Dorsolateral prefrontal cortex (tissue), 120 donors: ENCODE measurements at regions of chr14 and their contacts with region 1.

Region 1: DNA sequence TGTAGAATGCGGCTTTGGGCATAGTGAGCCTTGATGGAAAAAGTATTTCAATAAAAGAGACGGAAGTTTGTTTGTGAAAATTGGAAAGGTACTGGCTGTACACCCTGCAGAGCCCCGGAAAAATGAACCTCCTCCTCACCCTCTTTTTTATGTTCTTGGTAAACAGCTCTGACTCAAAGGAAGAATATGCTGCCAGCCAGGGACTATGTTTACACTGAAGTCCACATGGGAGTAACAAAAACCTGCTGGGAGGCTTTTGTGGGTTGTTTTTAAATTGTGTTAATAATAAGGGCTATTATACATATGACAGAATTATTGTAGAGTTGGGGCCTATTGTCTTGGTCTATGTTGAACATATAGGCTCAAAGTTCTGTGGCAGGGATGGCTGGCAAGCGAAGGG is 70.7 kb downstream of the TTC8 start:
- DNase-seq: no peak
- H3K4me3 ChIP-seq: no peak overlapping the region
- H3K27ac ChIP-seq: peak overlapping the region in 1 of 59 donors; percentile 3
- H3K27me3 ChIP-seq: no peaks in the 10 kb centered on the region
- CTCF ChIP-seq: no peak

Region 2: GRCh38 chr14:88630565-88630964 is 264.6 kb before region 1 on chr14:
- intact Hi-C with region 1: no loop called
- DNase-seq: no peak
- H3K4me3 ChIP-seq: no peak overlapping the region
- H3K27ac ChIP-seq: no peak overlapping the region
- H3K27me3 ChIP-seq: no peaks in the 10 kb centered on the region
- CTCF ChIP-seq: no peak

Region 3: DNA sequence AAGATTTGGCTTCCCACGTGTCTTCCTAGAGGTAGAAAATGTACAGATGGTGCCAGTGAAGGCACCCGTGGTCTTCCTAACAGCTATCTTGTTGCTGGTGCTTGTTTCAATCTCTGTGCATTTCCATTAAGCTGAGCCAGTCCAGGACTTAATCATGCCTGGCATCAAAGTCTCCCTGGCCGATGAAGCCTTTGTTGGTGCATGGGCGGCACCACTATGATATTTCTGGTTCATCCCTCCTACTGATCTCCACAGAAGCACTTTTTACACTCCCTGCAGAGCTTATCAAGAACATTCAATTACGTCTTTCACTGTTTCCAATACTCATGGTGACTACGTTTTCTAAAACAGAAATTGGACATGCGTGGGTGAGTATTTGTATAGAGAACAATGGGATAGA is 57.8 kb after region 1 on chr14:
- intact Hi-C with region 1: loop called in 1 of 2 experiments (anchors 2 kb)
- DNase-seq: peak in 5 of 10 donors; percentile 30 to 64 (median 53)
- H3K4me3 ChIP-seq: no peak overlapping the region
- H3K27ac ChIP-seq: peak overlapping the region in 38 of 59 donors; percentile 21 to 78 (median 57)
- H3K27me3 ChIP-seq: no peaks in the 10 kb centered on the region
- CTCF ChIP-seq: no peak